ENCODE measurements at regions of chr4 and their contacts with region 1.

Region 1: DNA sequence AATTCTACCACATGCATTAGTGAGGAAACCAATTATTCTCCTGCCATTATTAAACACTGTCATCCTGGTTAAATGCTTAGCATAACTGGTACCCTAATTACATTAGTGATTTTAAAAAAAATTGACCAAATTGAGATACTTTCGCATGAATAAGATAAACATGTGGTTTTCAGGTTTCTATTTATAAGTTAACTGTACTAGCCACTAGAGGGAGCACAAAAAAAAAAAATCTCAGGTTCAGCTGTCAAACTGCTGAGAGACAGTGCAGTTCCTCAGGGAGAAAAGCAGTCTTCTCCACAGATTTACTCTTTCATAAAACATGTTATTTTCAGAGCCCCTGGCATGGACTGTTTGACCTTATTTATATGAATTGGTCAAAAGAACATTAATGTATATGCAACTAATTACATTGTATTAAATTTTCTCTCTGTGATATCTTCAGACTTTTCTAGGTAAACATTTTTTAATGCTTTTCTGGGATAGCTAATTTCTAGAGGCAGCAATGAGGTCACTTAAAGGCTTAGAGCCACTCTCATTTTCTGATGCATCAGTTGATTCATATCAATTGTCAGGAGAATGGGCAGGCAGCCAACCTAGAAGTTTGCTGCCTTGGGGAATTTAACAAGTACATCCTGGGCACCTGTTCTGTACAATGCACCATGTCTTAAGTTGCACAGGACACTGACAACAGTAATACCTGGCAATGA is 167.5 kb downstream of the CDS1 start:
- DNase-seq: peak in 1 of 4 donors; percentile 16
- ATAC-seq: peak; percentile 56
- H3K4me3 ChIP-seq: no peak overlapping the region
- H3K27ac ChIP-seq: no peak overlapping the region
- H3K4me1 ChIP-seq: no peaks in the 10 kb centered on the region
- H3K27me3 ChIP-seq: no peaks in the 10 kb centered on the region
- CTCF ChIP-seq: peak; percentile 44 to 63 (median 57)
- POLR2A ChIP-seq: no peak

Region 2: DNA sequence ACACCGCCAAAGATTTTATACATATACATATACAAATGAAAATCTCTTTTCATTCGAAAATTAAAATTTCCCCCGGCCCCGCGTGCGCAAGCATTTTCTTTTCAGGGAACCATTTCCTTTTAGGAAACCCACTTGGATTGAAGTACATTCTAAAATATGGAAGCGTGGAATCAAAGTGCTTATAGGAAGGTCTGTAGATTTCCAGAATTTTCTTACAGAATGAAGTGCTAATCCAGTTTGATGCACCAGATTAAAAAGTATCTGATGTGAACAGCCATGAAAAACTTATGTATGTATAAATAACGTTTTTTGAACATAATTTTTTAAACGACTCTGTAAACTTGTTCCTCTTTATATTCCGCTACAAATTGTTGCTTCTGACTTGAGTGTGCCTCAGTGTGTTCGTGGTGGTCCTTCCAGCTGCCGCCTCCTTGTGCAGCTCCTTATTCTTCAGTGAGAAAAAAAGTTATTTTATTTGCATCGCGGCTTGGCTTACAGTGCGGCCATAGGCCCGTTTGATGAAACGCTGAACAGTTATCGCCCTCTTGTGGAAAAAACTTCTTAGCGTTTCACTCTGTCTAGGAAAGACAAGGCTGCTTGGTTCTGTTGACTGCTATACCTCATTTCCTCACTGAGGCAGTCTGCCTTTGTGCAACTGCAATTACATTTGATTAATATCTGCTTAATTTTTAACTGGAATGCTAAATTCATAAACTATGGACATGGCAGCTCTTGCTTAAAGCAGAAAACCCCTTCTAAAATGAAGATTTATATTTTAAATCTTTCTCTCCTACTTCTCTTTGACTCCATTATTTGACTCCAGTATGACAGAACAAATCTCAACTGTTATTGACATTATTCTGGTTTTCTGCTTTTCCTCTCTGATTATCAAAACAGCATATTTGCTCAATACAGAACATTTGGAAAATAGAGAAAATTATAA is 246.6 kb before region 1 on chr4:
- intact Hi-C with region 1: no loop called
- DNase-seq: peak in 3 of 4 donors; percentile 34 to 57 (median 47)
- ATAC-seq: peak; percentile 21
- H3K4me3 ChIP-seq: no peak overlapping the region
- H3K27ac ChIP-seq: no peak overlapping the region
- H3K4me1 ChIP-seq: peaks cover 10% of the 10 kb centered on the region
- H3K27me3 ChIP-seq: peaks cover 0 to 11% of the 10 kb centered on the region in 2 donors
- CTCF ChIP-seq: peak; percentile 45 to 75 (median 63)
- POLR2A ChIP-seq: no peak

Region 3: DNA sequence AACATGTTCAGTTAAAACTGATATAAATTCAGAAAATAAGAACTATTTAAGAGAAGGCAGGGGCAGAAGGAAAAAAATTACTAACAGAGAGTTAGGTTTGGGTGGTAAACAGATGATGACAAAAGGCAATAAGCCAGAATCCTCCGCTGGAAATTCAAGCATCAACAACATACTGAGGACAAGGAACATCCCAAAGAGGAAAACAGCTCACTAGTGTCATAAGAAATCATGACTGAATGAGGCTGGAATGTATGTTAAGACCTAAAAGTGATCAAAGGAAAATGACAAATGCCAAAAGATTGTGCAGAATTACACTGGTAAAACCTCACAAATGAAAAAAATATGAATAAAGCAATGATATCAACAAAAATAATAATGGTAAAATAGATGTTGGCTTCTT is 127.7 kb after region 1 on chr4:
- intact Hi-C with region 1: no loop called
- DNase-seq: no peak
- ATAC-seq: no peak
- H3K4me3 ChIP-seq: no peak overlapping the region
- H3K27ac ChIP-seq: no peak overlapping the region
- H3K4me1 ChIP-seq: no peaks in the 10 kb centered on the region
- H3K27me3 ChIP-seq: no peaks in the 10 kb centered on the region
- CTCF ChIP-seq: no peak
- POLR2A ChIP-seq: no peak

Region 4: GRCh38 chr4:84971319-84971932 is 221.0 kb after region 1 on chr4:
- intact Hi-C with region 1: loop called (anchors 5 kb)
- DNase-seq: no peak
- ATAC-seq: no peak
- H3K4me3 ChIP-seq: no peak overlapping the region
- H3K27ac ChIP-seq: no peak overlapping the region
- H3K4me1 ChIP-seq: peaks cover 6% of the 10 kb centered on the region
- H3K27me3 ChIP-seq: no peaks in the 10 kb centered on the region
- CTCF ChIP-seq: peak; percentile 13 to 71 (median 52)
- POLR2A ChIP-seq: no peak

Measured in body of pancreas (tissue), 4 donors.